Right cardiac atrium (tissue), 5 donors: ENCODE measurements at regions of chrX and their contacts with region 1.

Region 1: DNA sequence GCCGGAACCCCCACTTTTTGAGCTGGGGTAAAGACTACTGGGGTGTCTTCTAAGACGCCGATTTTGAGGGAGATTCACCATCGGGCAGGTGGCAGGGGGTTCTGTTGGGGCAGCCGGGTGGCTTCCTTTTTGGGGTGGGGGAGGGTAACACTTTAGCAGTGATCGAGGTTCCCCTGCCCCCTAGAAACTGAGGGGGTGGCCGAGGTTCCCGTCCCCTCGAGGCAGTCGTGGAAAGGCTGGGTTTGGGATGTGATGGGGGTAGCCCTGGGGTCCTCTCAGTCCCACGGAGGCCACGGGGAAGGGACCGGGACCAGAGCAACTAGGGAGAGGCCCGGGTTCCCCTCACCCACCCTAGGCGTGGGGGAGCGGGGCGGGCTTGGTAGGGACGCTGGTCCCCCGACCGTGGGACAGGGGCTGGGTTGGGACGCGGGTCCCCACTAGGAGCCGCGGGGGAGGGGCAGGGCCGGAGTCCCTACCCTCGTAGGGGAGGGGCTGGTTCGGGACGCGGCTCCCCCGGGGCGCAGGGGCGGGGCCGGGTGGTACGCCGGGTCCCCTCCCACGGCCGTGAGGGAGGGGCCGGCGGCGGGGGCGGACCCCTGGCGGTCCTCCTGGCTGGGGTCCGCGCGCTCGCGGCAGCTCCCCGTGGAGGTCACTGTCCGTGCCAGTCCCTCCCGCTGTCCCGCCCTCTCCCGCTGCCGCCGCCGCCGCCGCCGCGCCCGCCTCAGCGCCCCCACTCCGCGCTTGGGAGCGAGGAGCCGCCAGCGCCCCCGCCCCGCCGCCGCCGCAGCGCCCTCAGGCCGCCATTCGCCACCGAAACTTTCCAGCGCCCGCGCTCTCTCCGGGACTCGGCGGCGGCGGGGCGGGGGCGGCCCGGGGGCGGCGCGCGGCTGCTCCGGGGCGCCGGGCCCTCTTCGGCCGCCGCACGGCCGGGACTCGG is at the start of gene TBL1X:
- DNase-seq: peak; percentile 74 to 90 (median 88)
- ATAC-seq: peak; percentile 74 to 83
- H3K4me3 ChIP-seq: peak within 1 kb of the TSS; percentile 98
- H3K27ac ChIP-seq: peak within 1 kb of the TSS; percentile 87
- H3K4me1 ChIP-seq: peaks cover 5% of the 10 kb centered on the region
- H3K27me3 ChIP-seq: no peaks in the 10 kb centered on the region
- total RNA-seq, gene TBL1X: 13.4 to 16.3 (median 14.4) TPM

Region 2: GRCh38 chrX:9341291-9342201 is 123.2 kb before region 1 on chrX:
- intact Hi-C with region 1: loop called (anchors 2 to 10 kb)
- DNase-seq: peak; percentile 74 to 90 (median 88)
- ATAC-seq: peak; percentile 15 to 18
- H3K4me3 ChIP-seq: peak overlapping the region; percentile 25
- H3K27ac ChIP-seq: peak overlapping the region; percentile 86
- H3K4me1 ChIP-seq: peaks cover 7% of the 10 kb centered on the region
- H3K27me3 ChIP-seq: no peaks in the 10 kb centered on the region

Region 3: DNA sequence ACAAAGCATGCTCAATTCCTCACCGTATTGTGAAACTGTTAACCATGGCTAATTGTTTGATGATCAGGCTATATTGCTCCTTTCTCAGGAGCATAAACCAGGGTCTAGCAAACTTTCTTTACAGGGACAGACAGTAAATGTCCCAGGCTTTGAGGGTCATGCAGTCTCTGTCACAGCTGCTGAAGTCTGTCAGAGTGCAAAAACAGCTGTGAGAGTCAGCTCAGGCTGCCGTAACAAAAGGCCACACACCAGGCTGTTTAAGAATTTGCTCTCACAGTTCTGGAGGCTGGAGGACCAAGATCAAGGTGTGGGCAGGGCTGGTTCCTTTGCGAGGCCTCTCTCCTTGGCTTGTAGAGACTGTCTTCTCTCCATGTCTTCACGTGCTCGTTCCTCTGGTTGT is 225.3 kb after region 1 on chrX:
- intact Hi-C with region 1: loop called in 1 of 4 experiments (anchors 10 kb)
- DNase-seq: no peak
- ATAC-seq: no peak
- H3K4me3 ChIP-seq: no peak overlapping the region
- H3K27ac ChIP-seq: no peak overlapping the region
- H3K4me1 ChIP-seq: no peaks in the 10 kb centered on the region
- H3K27me3 ChIP-seq: no peaks in the 10 kb centered on the region